ENCODE measurements at regions of chr1 and their contacts with region 1.

Region 1: GRCh38 chr1:161059293-161059692 is 10.4 kb downstream of the ARHGAP30 start:
- DNase-seq: no peak
- H3K4me3 ChIP-seq: no peak overlapping the region
- H3K4me3 Mint-ChIP-seq: peak overlapping the region in 3 of 7 donors; percentile 25 to 69 (median 29)
- H3K27ac ChIP-seq: no peak overlapping the region
- H3K27ac Mint-ChIP-seq: peak overlapping the region; percentile 43 to 89 (median 74)
- H3K4me1 ChIP-seq: peaks cover 55% of the 10 kb centered on the region
- H3K4me1 Mint-ChIP-seq: peaks cover 51 to 69% (median 67%) of the 10 kb centered on the region in 3 donors
- H3K27me3 ChIP-seq: no peaks in the 10 kb centered on the region
- H3K27me3 Mint-ChIP-seq: peaks cover 0 to 1% of the 10 kb centered on the region in 2 donors

Region 2: DNA sequence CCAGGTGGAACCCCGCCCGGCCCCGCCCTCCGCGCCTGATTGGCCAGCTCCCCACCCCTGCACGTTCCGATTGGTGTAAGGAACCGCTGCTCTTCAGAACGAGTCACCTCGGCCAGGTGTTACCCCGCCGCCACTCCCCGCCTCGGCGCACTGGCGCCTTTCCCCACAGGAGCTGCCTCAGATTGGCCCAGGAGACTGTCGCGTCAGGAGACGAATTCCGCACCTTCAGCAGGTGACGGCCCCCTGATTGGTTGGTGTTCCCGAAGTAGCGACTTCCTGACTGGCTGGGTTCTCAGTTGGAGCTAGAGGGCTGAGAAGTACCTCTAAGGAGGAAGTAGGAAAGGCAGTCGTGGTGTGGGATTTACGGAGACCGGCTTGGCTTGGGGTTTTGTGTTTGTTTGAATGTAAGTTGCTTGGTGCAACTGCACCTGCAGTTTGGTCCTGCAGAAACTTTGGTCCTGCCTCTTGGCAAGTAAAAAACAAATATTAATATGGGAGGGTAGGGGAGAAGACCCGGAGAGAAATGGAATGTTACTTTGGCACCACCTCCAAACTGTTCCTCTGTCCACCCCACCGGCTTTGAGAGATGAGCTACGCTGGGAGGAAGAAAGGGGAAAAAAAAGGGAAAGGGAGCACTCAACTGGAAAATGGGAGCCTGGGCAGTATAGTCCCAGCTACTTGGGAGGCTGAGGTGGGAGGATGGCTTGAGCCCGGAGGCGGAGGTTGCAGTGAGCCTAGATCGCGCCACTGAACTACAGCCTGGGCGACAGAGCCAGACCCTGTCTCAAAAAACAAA is 37.9 kb before region 1 on chr1:
- CTCF ChIA-PET with region 1: no interaction called
- POLR2A ChIA-PET with region 1: no interaction called
- DNase-seq: peak; percentile 85 to 95 (median 91)
- H3K4me3 ChIP-seq: peak overlapping the region; percentile 99
- H3K4me3 Mint-ChIP-seq: peak overlapping the region; percentile 85 to 94 (median 91)
- H3K27ac ChIP-seq: peak overlapping the region; percentile 71
- H3K27ac Mint-ChIP-seq: peak overlapping the region; percentile 66 to 97 (median 95)
- H3K4me1 ChIP-seq: peaks cover 26% of the 10 kb centered on the region
- H3K4me1 Mint-ChIP-seq: peaks cover 19 to 60% (median 40%) of the 10 kb centered on the region in 3 donors
- H3K27me3 ChIP-seq: no peaks in the 10 kb centered on the region
- H3K27me3 Mint-ChIP-seq: no peaks in the 10 kb centered on the region

Region 3: GRCh38 chr1:161153679-161154426 is 94.6 kb after region 1 on chr1 and contains the start of gene UFC1:
- CTCF ChIA-PET with region 1: no interaction called
- POLR2A ChIA-PET with region 1: interaction called, 11 read pairs
- DNase-seq: peak; percentile 68 to 90 (median 88)
- H3K4me3 ChIP-seq: peak within 1 kb of the TSS; percentile 87
- H3K4me3 Mint-ChIP-seq: peak within 1 kb of the TSS; percentile 98 to 100 (median 98)
- H3K27ac ChIP-seq: peak within 1 kb of the TSS; percentile 98
- H3K27ac Mint-ChIP-seq: peak within 1 kb of the TSS; percentile 98 to 100 (median 100)
- H3K4me1 ChIP-seq: peaks cover 14% of the 10 kb centered on the region
- H3K4me1 Mint-ChIP-seq: peaks cover 25 to 45% (median 34%) of the 10 kb centered on the region in 3 donors
- H3K27me3 ChIP-seq: no peaks in the 10 kb centered on the region
- H3K27me3 Mint-ChIP-seq: no peaks in the 10 kb centered on the region
- total RNA-seq, gene UFC1: 109 to 118 TPM